ENCODE measurements at regions of chr7 and their contacts with region 1.

Region 1: DNA sequence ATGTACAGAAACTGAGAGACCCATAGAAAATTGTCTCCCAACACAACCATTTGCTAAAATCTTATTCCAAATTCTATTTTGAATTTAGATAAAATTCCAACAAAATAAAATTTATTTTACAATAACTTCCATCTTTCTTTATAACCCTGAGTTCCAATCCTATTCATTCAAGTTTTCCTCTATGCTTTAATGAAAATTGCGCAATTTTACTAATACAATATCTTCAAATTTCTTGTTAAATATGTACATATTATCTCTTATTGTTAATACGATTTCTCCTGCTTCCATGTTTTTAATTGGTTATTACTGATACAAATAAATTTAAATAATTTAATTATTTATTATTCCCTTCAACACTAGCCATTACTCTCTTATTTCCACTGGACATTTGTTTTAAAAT is 645.2 kb upstream of the COBL start:
- DNase-seq: no peak
- ATAC-seq: no peak
- H3K4me3 ChIP-seq: no peak overlapping the region
- H3K27ac ChIP-seq: no peak overlapping the region
- H3K4me1 ChIP-seq: no peaks in the 10 kb centered on the region
- H3K27me3 ChIP-seq: peaks cover 0 to 3% (median 0%) of the 10 kb centered on the region in 9 donors
- CTCF ChIP-seq: no peak
- POLR2A ChIP-seq: no peak

Region 2: GRCh38 chr7:51539840-51540239 is 422.0 kb before region 1 on chr7:
- intact Hi-C with region 1: no loop called
- DNase-seq: no peak
- ATAC-seq: no peak
- H3K4me3 ChIP-seq: no peak overlapping the region
- H3K27ac ChIP-seq: no peak overlapping the region
- H3K4me1 ChIP-seq: no peaks in the 10 kb centered on the region
- H3K27me3 ChIP-seq: no peaks in the 10 kb centered on the region
- CTCF ChIP-seq: no peak
- POLR2A ChIP-seq: no peak

Region 3: DNA sequence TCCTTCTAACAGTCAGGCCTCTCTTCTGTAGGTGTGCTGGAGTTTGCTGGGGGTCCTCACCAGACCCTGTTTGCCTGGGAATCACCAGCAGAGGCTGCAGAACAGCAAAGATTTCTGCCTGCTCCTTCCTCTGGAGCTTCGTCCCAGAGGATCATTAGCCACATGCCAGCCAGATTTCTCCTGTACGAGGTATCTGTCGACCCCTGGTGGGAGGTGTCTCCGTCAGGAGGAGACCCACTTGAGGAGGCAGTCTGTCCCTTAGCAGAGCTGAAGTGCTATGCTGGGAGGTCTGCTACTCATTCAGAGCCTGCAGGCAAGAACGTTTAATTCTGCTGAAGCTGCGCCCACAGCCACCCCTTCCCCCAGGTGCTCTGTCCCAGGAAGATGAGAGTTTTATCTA is 34.1 kb before region 1 on chr7:
- intact Hi-C with region 1: loop called in 1 of 10 experiments (anchors 5 kb)
- DNase-seq: no peak
- ATAC-seq: no peak
- H3K4me3 ChIP-seq: no peak overlapping the region
- H3K27ac ChIP-seq: no peak overlapping the region
- H3K4me1 ChIP-seq: no peaks in the 10 kb centered on the region
- H3K27me3 ChIP-seq: no peaks in the 10 kb centered on the region
- CTCF ChIP-seq: no peak
- POLR2A ChIP-seq: no peak

Region 4: GRCh38 chr7:52233248-52233647 is 271.4 kb after region 1 on chr7:
- intact Hi-C with region 1: no loop called
- DNase-seq: no peak
- ATAC-seq: no peak
- H3K4me3 ChIP-seq: no peak overlapping the region
- H3K27ac ChIP-seq: no peak overlapping the region
- H3K4me1 ChIP-seq: no peaks in the 10 kb centered on the region
- H3K27me3 ChIP-seq: no peaks in the 10 kb centered on the region
- CTCF ChIP-seq: no peak
- POLR2A ChIP-seq: no peak